ENCODE measurements at regions of chr2 and their contacts with region 1.

Region 1: DNA sequence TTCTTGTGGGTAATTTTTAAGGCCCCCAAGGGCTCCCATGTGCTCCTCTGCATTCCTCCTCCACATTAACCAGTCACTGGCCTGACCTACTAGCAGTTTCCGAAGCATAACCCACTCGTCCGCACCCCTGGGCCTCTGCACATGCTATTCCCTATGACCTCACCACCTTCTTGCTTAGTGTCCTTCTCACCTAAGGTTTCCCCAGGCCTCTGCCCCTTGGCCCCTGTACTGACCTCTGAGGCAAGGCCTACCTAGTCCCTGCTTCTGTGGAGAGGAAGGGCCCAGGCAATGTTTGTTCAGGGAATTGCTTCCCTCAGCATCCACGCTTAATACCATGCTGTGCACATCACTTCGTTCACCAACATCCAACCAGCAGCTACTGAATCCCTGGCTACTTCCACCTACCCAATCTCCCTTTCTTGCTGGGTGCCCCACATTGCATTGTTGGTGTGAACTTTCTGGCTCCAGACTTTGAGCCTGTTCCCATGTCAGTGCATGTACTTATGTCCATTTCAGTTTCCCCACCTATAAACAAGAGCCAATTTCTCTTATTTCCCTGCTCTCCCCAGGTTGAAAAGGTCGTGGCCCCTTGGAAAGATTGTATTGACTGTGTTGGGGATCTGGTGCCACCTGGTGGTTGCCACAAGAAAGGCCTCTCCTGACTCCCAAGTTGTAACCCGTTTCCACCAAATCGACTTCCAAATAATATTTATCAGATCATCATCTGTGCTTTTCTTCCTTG is 19.2 kb upstream of the TMEM177 start:
- DNase-seq: no peak
- H3K4me3 ChIP-seq: no peak overlapping the region
- H3K27ac ChIP-seq: no peak overlapping the region
- H3K4me1 ChIP-seq: no peaks in the 10 kb centered on the region
- H3K27me3 ChIP-seq: no peaks in the 10 kb centered on the region
- CTCF ChIP-seq: peak; percentile 89 to 96

Region 2: GRCh38 chr2:119218478-119219064 is 441.2 kb before region 1 on chr2:
- CTCF ChIA-PET with region 1: no interaction called
- dilution Hi-C with region 1: no loop called
- in situ Hi-C with region 1: no loop called
- intact Hi-C with region 1: loop called (anchors 2 kb)
- DNase-seq: peak; percentile 54
- H3K4me3 ChIP-seq: no peak overlapping the region
- H3K27ac ChIP-seq: no peak overlapping the region
- H3K4me1 ChIP-seq: peaks cover 21% of the 10 kb centered on the region
- H3K27me3 ChIP-seq: no peaks in the 10 kb centered on the region
- CTCF ChIP-seq: peak in 1 of 2 donors; percentile 34

Region 3: DNA sequence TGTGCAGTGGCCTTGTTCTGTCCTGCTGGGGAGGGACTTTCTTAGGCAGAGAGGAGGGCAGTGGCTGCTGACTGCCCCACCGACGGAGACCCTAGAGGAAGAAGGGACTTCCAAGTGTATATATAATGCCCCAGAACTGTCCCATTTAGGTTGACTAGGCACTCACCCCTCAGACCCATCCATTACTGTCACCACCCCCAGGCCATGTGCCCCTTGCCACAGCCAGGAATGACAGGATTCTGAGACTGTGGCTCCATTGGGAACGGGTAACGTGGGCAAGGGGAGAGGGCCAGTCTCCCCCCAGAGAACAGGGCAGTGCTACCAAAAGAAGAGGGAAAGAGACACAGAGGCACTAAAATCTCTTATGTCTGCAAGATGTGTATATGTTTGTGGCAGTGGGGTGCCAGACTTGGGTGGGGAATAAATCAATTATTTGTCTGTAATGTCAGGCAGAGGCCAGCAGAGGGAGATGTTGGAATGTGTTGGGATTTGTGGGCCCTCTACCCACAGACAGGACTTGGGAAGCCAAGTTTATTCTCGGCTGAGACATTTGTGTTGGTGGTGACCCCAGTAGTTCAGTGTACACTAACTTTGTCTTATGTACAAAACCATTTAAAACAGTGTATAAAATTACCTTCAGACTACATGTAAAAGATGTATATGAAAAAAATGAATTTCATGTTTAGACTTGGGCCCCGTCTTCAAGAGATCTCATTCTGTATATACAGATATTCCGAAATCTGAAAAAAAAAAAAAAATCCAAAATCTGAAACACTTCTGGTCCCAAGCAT is 252.1 kb before region 1 on chr2:
- CTCF ChIA-PET with region 1: no interaction called
- dilution Hi-C with region 1: no loop called
- in situ Hi-C with region 1: loop called in 1 of 2 experiments (anchors 25 kb)
- intact Hi-C with region 1: loop called (anchors 1 kb)
- DNase-seq: peak; percentile 25
- H3K4me3 ChIP-seq: no peak overlapping the region
- H3K27ac ChIP-seq: no peak overlapping the region
- H3K4me1 ChIP-seq: no peaks in the 10 kb centered on the region
- H3K27me3 ChIP-seq: peaks cover 4% of the 10 kb centered on the region
- CTCF ChIP-seq: peak; percentile 75 to 76

Region 4: DNA sequence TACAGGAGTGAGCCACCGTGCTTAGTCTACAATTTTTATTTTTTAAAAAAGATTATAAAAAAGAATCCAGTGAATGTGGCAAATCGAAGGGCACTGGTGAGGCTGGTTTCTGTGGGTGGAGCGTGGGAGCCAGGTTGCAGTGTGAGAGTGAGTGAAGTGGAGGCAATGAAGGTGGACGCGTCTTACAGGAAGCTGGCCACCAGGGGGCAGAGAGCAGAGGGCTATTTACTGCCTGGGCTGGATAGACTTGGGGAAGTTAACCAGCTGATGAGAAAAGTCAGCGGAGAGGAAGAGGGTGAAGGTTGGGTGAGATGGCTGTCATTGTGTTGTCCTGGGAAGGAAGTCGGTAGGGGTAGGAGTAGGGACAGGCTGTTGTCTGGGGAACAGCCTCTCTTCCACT is 142.3 kb before region 1 on chr2:
- CTCF ChIA-PET with region 1: no interaction called
- dilution Hi-C with region 1: no loop called
- in situ Hi-C with region 1: no loop called
- intact Hi-C with region 1: loop called (anchors 1 kb)
- DNase-seq: peak; percentile 27
- H3K4me3 ChIP-seq: no peak overlapping the region
- H3K27ac ChIP-seq: no peak overlapping the region
- H3K4me1 ChIP-seq: no peaks in the 10 kb centered on the region
- H3K27me3 ChIP-seq: peaks cover 4% of the 10 kb centered on the region
- CTCF ChIP-seq: peak; percentile 62 to 82

Region 5: DNA sequence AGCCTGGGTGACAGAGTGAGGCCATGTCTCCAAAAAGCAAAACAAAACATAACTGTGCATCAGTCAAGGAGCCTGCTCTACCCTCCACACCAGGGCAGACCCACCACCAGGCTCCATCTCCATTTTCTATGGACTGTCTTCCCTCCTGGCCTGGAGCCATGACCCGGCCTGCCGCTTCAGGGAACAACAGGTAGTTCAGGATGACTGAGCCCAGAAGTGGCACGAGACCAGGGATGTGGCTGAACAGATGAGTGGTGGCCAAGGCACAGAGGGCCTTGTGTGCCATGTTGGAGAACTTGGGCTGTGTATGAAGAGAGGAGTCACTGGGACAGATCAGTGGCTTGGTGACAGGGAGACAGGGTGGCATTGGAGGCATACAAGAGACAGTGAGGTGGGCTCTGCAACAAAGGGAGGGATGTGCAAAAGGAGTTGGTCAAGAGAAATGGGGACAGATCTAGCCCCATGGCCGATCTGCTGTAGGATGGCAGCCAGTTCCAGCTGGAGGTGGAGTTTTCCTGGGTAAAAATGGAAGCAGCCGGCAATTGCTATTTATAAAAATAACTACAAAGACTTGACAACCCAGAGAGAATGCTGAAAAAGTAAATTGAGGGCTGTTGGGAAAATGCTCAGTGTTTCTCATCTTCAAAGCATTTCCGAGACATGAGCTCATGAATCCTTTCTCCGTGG is 54.2 kb after region 1 on chr2:
- CTCF ChIA-PET with region 1: no interaction called
- dilution Hi-C with region 1: no loop called
- in situ Hi-C with region 1: no loop called
- intact Hi-C with region 1: no loop called
- DNase-seq: no peak
- H3K4me3 ChIP-seq: no peak overlapping the region
- H3K27ac ChIP-seq: no peak overlapping the region
- H3K4me1 ChIP-seq: no peaks in the 10 kb centered on the region
- H3K27me3 ChIP-seq: no peaks in the 10 kb centered on the region
- CTCF ChIP-seq: no peak

Region 6: DNA sequence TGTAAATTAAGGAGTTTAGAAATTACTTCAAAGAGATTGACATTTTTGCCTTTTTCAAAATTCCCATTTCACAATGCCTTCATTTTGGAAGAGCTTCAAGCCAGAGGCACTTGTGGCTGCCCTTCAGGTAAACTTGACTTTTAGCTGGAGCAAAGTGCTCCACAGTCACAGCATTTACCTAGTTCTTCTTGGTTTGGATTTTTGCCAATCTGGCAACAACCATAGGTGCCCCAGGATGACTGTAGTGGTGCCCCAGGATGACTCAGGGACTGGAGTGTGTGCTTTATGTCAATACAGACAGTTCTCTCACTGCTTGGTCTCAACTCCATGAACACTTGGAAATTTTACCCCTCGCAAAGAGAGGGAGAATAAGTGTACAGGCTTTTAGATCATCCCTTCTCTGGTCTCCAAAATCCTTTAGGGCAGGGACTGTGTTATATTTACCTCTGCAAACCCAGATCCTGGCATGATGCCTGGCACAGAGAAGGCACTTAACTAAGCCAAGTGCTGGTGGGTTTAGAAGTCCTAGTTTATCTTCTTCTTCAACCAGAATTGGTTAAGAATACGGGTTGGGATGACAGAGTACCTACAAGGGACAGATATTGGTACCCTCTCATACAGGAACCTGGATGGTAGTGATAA is 84.6 kb after region 1 on chr2:
- CTCF ChIA-PET with region 1: no interaction called
- dilution Hi-C with region 1: no loop called
- in situ Hi-C with region 1: no loop called
- intact Hi-C with region 1: no loop called
- DNase-seq: peak; percentile 90
- H3K4me3 ChIP-seq: no peak overlapping the region
- H3K27ac ChIP-seq: no peak overlapping the region
- H3K4me1 ChIP-seq: peaks cover 25% of the 10 kb centered on the region
- H3K27me3 ChIP-seq: peaks cover 2% of the 10 kb centered on the region
- CTCF ChIP-seq: no peak

Measured in mammary epithelial cell (primary cell).